ENCODE measurements at regions of chr3 and their contacts with region 1.

Region 1: DNA sequence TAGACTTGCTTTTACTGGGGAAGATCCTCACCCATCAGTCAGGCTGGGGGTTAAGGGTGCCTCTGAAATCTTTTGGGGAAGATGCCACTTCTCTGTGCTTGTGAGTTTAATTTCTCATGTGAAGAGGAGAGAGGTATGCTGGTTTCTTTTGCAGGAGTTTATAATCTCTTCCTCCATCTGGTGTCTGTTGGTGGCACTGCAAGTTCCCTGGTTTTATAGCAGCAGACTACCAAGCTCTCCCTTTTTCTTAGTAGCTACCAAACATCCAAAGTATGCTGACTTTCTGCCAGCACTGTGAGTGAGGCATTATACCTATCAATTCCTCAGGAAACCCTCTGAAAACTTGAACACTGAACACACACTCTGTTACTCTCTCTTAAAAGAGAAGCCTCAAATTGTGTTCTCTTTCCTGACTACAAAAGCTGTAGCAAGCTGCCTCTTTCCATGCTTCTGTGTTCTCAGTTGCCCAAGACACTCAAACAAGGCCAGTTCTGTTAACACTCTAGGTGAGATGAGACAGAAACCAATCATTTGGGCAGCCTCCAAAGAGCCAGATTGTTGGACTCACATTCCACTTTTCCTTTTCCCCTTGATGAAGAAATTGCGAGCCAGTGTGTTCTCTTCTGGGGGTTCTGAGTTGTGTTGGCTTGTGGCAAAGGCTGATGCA is 299.5 kb downstream of the GAP43 start:
- DNase-seq: peak; percentile 51
- ATAC-seq: peak; percentile 98
- H3K4me3 Mint-ChIP-seq: no peak overlapping the region
- H3K27ac Mint-ChIP-seq: no peak overlapping the region
- H3K4me1 Mint-ChIP-seq: 0 out of 2 replicates have a peak, but pooled peaks cover 3% of the 10 kb centered on the region
- H3K27me3 Mint-ChIP-seq: no peaks in the 10 kb centered on the region
- CTCF ChIP-seq: peak; percentile 45

Region 2: DNA sequence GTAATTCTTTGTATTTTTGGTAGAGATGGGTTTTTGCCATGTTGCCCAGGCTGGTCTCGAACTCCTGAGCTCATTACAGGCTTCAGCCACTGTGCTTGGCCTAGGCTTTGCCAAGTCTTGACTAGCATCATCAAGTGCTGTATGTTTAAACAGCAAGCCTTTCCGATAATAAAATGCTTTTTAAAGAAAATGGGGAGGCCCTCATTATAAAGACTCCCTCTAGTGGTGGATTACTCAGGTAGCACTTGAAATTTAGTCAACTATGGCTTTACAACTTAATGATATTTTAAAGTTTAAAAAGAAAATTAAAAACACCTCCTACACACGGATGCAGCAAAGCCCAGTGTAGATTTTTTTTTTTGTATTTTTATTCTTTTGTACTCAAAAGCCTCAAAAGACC is 85.9 kb before region 1 on chr3:
- CTCF ChIA-PET with region 1: interaction called, 21 read pairs
- POLR2A ChIA-PET with region 1: no interaction called
- DNase-seq: no peak
- ATAC-seq: peak; percentile 41; the same call in 1 of the 2 replicates
- H3K4me3 Mint-ChIP-seq: no peak overlapping the region
- H3K27ac Mint-ChIP-seq: no peak overlapping the region
- H3K4me1 Mint-ChIP-seq: peaks cover 14% of the 10 kb centered on the region
- H3K27me3 Mint-ChIP-seq: no peaks in the 10 kb centered on the region
- CTCF ChIP-seq: peak; percentile 58

Region 3: GRCh38 chr3:115876876-115877614 is 45.8 kb before region 1 on chr3:
- CTCF ChIA-PET with region 1: interaction called, 12 read pairs
- POLR2A ChIA-PET with region 1: no interaction called
- DNase-seq: no peak
- ATAC-seq: no peak
- H3K4me3 Mint-ChIP-seq: no peak overlapping the region
- H3K27ac Mint-ChIP-seq: no peak overlapping the region
- H3K4me1 Mint-ChIP-seq: peaks cover 37% of the 10 kb centered on the region
- H3K27me3 Mint-ChIP-seq: no peaks in the 10 kb centered on the region
- CTCF ChIP-seq: no peak

Region 4: GRCh38 chr3:116288485-116288884 is 365.7 kb after region 1 on chr3:
- CTCF ChIA-PET with region 1: no interaction called
- POLR2A ChIA-PET with region 1: no interaction called
- DNase-seq: no peak
- ATAC-seq: no peak
- H3K4me3 Mint-ChIP-seq: no peak overlapping the region
- H3K27ac Mint-ChIP-seq: no peak overlapping the region
- H3K4me1 Mint-ChIP-seq: peaks cover 20% of the 10 kb centered on the region
- H3K27me3 Mint-ChIP-seq: no peaks in the 10 kb centered on the region
- CTCF ChIP-seq: no peak